ENCODE measurements at regions of chr16 and their contacts with region 1.

Region 1: GRCh38 chr16:4734063-4734729 is at the starts of genes ANKS3 and DNAAF8:
- DNase-seq: peak; percentile 96
- H3K4me3 ChIP-seq: peak within 1 kb of the TSS; percentile 80 to 82
- H3K27ac ChIP-seq: peak within 1 kb of the TSS; percentile 76 to 82
- H3K4me1 ChIP-seq: no peaks in the 10 kb centered on the region
- H3K27me3 ChIP-seq: no peaks in the 10 kb centered on the region
- CTCF ChIP-seq: peak in 1 of 4 experiments; percentile 21
- POLR2A ChIP-seq: no peak
- total RNA-seq, gene ANKS3: 19.1 to 42.9 TPM
- total RNA-seq, gene DNAAF8: 7.1 to 21.9 TPM

Region 2: DNA sequence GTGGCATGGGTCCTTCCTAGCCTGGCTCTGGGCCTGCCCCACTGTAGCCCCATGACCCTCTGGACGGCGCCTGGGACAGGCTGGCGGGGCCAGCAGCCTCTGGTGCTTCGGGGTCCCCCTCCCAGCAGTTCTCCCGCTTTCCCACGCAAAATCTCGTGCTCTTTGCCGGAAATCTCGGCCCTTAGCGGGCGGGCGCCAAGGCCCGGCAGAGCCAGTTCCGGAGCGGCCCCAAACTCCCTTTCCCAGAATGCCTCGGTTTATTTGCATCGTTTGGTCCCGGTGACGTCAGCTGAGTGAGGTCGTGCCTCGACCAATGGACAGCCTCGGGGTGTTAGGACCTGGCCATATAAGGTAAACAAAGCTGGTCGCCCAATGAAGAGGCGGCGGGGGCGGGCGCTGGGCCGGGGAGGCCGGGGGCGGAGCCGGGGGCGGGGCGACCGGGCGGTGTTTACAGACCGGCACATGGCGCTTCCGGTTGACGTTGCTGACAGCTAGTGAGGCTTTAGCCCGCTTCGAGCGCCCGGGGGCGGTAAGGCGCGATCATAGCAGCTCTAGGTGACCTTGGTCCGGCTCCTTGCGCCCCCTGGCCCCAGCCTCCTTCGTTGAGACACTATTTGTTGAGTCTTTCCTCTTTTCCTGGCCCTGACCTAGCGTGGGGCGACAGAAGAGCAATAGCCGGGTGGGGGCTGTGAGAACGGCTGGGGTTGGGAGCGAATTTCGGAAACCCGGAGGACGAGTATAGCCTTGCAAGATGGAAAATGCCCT is 118.0 kb before region 1 on chr16:
- intact Hi-C with region 1: loop called (anchors 10 kb)
- DNase-seq: peak; percentile 100
- H3K4me3 ChIP-seq: peak overlapping the region; percentile 56 to 59
- H3K27ac ChIP-seq: peak overlapping the region; percentile 100
- H3K4me1 ChIP-seq: peaks cover 24% of the 10 kb centered on the region
- H3K27me3 ChIP-seq: no peaks in the 10 kb centered on the region
- CTCF ChIP-seq: peak in 3 of 4 experiments; percentile 32 to 44 (median 41)
- POLR2A ChIP-seq: peak; percentile 87

Region 3: DNA sequence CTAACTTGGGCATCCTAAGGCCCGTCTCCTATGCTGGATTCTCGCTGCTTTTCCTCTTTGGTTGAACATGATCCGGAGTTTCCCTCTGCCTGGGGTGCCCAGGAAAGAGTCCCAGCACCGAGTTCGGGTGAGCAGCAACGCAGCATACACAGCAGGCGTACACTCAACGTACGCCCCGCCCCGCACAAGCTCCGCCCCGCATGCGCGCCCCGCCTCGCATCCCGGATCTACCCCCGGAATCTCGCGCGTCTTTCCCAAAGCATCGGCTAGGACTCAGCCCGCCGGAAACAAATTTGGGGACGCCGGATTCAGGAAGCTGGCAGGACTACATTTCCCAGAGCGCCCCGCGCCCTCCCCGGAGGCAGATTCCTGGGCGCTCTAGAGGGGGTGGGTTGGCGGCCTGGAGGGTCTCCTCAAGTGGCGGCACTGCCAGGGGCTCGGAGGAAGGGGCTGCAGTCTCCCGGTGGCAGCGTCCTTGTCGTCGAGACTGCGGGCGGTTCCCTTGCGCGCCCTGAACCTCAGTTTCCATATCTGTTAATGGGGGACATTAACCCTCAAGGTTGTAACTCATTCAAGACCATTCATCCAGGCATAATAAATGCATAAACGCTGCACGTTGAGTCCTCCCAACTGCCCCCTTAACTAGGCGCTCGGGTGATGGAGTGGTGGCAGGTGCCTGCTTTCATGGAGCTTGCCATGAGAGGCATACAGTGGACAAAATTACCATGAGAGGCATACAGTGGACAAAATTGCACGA is 34.5 kb after region 1 on chr16:
- intact Hi-C with region 1: loop called (anchors 1 kb)
- DNase-seq: peak; percentile 97
- H3K4me3 ChIP-seq: peak overlapping the region; percentile 51 to 99
- H3K27ac ChIP-seq: peak overlapping the region; percentile 89 to 92
- H3K4me1 ChIP-seq: peaks cover 15% of the 10 kb centered on the region
- H3K27me3 ChIP-seq: no peaks in the 10 kb centered on the region
- CTCF ChIP-seq: no peak
- POLR2A ChIP-seq: peak; percentile 85

Region 4: GRCh38 chr16:4802659-4803287 is 68.6 kb after region 1 on chr16:
- intact Hi-C with region 1: loop called (anchors 10 kb)
- DNase-seq: peak; percentile 91
- H3K4me3 ChIP-seq: peak overlapping the region; percentile 67 to 70
- H3K27ac ChIP-seq: peak overlapping the region; percentile 80 to 85
- H3K4me1 ChIP-seq: peaks cover 13% of the 10 kb centered on the region
- H3K27me3 ChIP-seq: no peaks in the 10 kb centered on the region
- CTCF ChIP-seq: peak in 3 of 4 experiments; percentile 20 to 68 (median 60)
- POLR2A ChIP-seq: no peak

Region 5: DNA sequence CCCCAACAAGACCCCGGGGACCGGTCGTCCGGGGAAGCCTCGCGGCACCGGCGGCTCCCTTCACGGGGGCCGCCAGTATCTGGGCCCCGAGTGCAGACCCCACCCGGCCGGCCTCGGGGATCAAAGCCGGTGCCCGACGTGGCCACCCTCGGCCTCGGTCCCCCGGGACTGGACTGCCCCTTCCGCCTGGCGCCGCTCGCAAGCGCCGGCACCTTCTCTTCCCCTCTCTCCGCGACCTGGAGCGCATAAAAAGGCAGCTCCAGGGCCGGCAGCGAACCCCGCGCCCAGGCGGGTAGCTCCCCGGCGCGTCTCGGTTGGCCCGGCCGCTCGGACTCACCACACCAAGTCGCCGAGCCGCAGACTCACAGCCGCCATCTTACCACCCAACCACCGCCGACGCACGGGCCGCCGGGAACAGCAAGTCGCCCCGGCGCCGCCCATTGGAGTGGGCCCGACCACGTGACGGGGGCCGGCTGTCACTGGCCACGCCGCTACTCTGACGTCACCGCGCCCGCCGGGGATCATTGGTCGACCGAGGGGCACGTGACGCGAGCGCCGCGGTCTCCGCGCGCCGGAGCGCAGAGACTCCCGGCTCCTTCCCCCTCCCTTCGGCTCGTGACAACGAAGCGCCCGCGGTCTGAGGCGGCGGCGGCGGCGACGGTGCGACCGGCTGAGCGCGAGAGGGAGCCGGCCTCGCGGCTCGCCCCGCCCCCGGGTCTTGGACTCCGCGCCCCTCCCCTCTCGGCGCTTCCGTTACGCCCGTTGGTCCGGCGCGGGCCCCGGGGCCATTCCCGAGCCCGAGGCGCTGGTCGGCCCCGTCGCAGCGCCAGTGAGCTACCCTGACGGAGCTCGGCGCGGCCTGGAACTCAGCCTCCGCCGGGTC is 112.9 kb after region 1 on chr16 and contains the starts of genes GLYR1 and UBN1:
- intact Hi-C with region 1: loop called (anchors 10 kb)
- DNase-seq: peak; percentile 99
- H3K4me3 ChIP-seq: peak within 1 kb of the TSS; percentile 94 to 98
- H3K27ac ChIP-seq: peak within 1 kb of the TSS; percentile 91 to 96
- H3K4me1 ChIP-seq: peaks cover 13% of the 10 kb centered on the region
- H3K27me3 ChIP-seq: no peaks in the 10 kb centered on the region
- CTCF ChIP-seq: peak in 1 of 4 experiments; percentile 15
- POLR2A ChIP-seq: peak; percentile 77
- total RNA-seq, gene GLYR1: 57.4 to 60.8 TPM
- total RNA-seq, gene UBN1: 28.2 to 56.9 TPM

Region 6: GRCh38 chr16:4957720-4958509 is 223.7 kb after region 1 on chr16 and contains the start of gene SEC14L5:
- intact Hi-C with region 1: loop called (anchors 2 kb)
- DNase-seq: peak; percentile 99
- H3K4me3 ChIP-seq: peak within 1 kb of the TSS; percentile 28 to 44
- H3K27ac ChIP-seq: peak within 1 kb of the TSS; percentile 71 to 74
- H3K4me1 ChIP-seq: peaks cover 2% of the 10 kb centered on the region
- H3K27me3 ChIP-seq: no peaks in the 10 kb centered on the region
- CTCF ChIP-seq: peak in 1 of 4 experiments; percentile 21
- POLR2A ChIP-seq: peak; percentile 58
- total RNA-seq, gene SEC14L5: 0.74 to 0.77 TPM